Activated CD4-positive, alpha-beta T cell treated with anti-CD3 and anti-CD28 coated beads for 36 hours (primary cell): ENCODE measurements at regions of chr9 and their contacts with region 1.

Region 1: DNA sequence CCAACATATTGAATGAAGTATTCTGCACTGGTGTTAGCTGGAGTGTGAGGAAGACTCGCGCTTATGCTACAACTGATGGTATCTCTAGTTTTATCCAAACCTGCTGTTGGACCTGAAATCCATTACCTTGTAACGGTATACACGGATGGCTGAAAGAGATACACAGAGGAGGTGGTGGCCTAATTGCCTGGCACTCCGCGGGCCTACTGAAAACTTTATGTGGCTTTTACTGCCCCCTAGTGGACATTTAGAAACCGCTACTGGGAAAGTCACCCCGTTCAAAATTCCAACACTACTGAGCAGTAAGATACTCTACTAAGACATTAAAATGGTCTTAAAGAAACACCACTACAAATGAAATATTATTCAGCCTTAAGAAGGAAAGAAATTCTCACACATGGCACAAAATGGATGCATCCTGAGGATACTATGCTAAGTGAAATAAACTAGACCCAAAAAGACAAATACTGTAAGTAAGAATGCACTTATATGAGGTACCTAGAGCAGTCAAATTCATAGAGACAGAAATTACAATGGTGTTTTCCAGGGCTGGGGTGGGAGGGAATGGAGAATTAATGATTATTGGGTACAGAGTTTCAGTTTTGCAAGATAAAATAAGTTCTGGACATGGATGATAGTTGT is 100.4 kb downstream of the TTLL11 start:
- DNase-seq: peak; percentile 62
- ATAC-seq: peak; percentile 85
- H3K4me3 Mint-ChIP-seq: no peak overlapping the region
- H3K27ac Mint-ChIP-seq: no peak overlapping the region
- H3K4me1 Mint-ChIP-seq: no peaks in the 10 kb centered on the region
- H3K27me3 Mint-ChIP-seq: no peaks in the 10 kb centered on the region

Region 2: DNA sequence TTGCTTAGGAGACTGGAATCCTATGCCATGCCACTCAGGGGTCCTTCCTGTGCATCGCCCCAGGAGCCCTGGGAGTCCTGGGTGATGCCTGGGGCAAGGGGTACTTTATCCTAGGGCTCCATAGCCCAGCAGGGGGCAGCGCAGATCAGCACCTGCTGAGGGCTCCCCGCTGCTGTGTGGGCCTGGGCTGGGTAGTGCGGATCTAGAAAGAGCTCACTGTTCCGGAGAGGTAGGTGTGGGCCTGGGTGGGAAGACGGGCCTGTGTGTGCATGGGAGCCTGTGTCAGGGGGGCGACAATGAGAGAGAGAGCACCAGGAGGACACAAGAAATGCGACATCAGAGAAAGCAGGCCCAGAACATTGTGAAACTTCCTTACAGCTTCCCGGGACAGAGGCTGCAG is 352.6 kb before region 1 on chr9:
- CTCF ChIA-PET with region 1: interaction called, 3 read pairs
- POLR2A ChIA-PET with region 1: no interaction called
- intact Hi-C with region 1: loop called (anchors 2 kb)
- DNase-seq: peak; percentile 71
- ATAC-seq: peak; percentile 77
- H3K4me3 Mint-ChIP-seq: no peak overlapping the region
- H3K27ac Mint-ChIP-seq: no peak overlapping the region
- H3K4me1 Mint-ChIP-seq: no peaks in the 10 kb centered on the region
- H3K27me3 Mint-ChIP-seq: peaks cover 2% of the 10 kb centered on the region

Region 3: GRCh38 chr9:121698627-121699570 is 293.8 kb before region 1 on chr9:
- CTCF ChIA-PET with region 1: no interaction called
- POLR2A ChIA-PET with region 1: no interaction called
- intact Hi-C with region 1: loop called in 1 of 2 experiments (anchors 5 kb)
- DNase-seq: peak; percentile 78
- ATAC-seq: peak; percentile 73
- H3K4me3 Mint-ChIP-seq: no peak overlapping the region
- H3K27ac Mint-ChIP-seq: no peak overlapping the region
- H3K4me1 Mint-ChIP-seq: no peaks in the 10 kb centered on the region
- H3K27me3 Mint-ChIP-seq: peaks cover 37% of the 10 kb centered on the region

Region 4: DNA sequence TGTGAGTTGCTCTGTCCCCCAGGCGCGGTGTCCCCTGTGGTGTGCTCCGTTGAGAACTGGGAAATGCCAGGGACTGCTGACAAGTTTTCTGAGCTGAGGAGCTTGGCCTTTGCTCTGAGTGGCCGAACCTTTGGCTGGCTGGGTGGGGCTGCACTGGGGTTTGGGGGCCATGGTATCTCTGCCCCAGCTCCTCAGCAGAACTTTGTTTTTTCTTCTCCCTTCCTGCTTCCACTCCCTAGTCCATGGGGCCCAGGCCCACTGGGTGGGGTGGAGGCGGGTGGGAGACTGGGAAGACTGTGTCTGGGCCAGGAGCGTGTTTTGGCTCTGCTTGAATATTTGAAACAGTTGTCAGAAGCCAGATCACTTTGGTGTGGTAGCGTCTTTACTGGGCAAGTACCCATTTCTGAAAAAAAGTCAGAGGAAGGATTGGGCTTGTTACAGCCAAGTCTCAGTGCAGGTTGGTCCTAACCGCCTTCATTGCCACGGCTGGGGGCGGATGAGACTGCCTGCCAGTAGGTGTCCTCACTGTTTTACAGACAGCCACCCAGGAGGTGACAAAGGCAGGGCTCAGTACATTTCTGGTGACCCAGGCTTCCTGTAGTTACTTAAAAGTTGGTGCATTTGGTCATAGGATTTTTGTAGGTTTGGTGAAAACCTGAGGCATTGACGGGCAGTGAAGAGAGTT is 248.5 kb before region 1 on chr9:
- CTCF ChIA-PET with region 1: no interaction called
- POLR2A ChIA-PET with region 1: no interaction called
- intact Hi-C with region 1: loop called (anchors 1 kb)
- DNase-seq: peak; percentile 70
- ATAC-seq: peak; percentile 79
- H3K4me3 Mint-ChIP-seq: no peak overlapping the region
- H3K27ac Mint-ChIP-seq: no peak overlapping the region
- H3K4me1 Mint-ChIP-seq: peaks cover 11% of the 10 kb centered on the region
- H3K27me3 Mint-ChIP-seq: no peaks in the 10 kb centered on the region